ENCODE measurements at regions of chr6 and their contacts with region 1.

Region 1: DNA sequence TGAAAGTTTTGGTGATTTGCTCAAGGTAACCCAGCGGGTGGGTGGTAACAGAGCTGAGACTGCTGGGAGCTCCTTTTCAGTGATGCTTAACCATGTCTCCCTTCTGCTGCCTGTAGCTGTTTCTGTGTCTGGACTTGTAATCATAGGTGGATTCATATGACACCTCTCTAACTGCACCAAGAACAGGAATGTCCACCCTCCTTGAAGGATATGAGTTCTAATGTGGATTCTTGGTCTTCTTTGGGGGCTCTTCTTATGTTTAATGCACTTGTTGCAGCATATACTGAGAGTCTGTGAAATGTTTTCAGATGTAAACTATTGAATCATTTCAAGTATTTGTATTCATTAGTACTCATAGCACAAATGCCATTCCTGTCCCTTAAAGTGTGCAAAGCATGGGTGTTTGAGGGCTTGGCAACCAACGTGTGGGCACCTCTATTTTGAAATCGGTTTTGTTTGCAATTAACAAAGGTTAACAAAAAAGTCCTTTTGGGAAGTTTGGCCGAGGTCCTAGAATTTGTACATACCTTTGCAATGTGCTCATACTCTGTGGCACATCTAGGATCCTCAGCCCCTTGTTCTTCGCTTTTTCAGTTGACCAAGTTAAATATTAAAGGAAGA is 138.0 kb downstream of the SOX4 start:
- DNase-seq: peak; percentile 68 to 95
- H3K4me3 ChIP-seq: no peak overlapping the region
- H3K27ac ChIP-seq: peak overlapping the region; percentile 63
- H3K4me1 ChIP-seq: peaks cover 43% of the 10 kb centered on the region
- H3K27me3 ChIP-seq: no peaks in the 10 kb centered on the region
- CTCF ChIP-seq: no peak

Region 2: GRCh38 chr6:21679761-21680265 is 51.7 kb before region 1 on chr6:
- CTCF ChIA-PET with region 1: no interaction called
- POLR2A ChIA-PET with region 1: no interaction called
- intact Hi-C with region 1: loop called (anchors 2 kb)
- DNase-seq: peak; percentile 40 to 72
- H3K4me3 ChIP-seq: no peak overlapping the region
- H3K27ac ChIP-seq: no peak overlapping the region; the same call in 1 of the 2 replicates
- H3K4me1 ChIP-seq: peaks cover 14% of the 10 kb centered on the region; the same call in 1 of the 2 replicates
- H3K27me3 ChIP-seq: no peaks in the 10 kb centered on the region
- CTCF ChIP-seq: no peak

Region 3: GRCh38 chr6:21800948-21801438 is 69.5 kb after region 1 on chr6:
- CTCF ChIA-PET with region 1: no interaction called
- POLR2A ChIA-PET with region 1: no interaction called
- intact Hi-C with region 1: loop called (anchors 5 kb)
- DNase-seq: peak; percentile 76 to 95
- H3K4me3 ChIP-seq: no peak overlapping the region
- H3K27ac ChIP-seq: peak overlapping the region; percentile 60
- H3K4me1 ChIP-seq: peaks cover 23% of the 10 kb centered on the region
- H3K27me3 ChIP-seq: no peaks in the 10 kb centered on the region
- CTCF ChIP-seq: no peak

Region 4: DNA sequence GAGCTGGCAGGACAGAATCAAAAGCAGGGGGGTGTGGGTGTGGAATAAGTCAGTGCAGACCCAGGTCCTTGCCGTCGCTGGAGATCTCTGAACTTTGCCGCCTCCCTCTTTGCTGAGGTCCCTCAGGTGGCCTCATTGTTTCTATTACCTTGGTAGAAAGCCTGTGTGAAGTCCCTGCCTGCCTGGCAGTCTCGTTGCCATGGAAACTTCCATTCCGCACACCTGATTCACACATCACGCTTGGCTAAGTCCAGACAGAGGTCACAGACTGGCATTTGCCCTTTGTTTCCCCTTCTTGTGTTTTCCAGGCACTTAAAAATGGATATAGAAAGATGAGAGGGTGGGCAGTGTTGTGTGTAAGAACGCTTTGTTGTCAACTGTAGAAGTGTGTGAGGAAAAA is 304.8 kb after region 1 on chr6:
- CTCF ChIA-PET with region 1: no interaction called
- POLR2A ChIA-PET with region 1: no interaction called
- intact Hi-C with region 1: loop called (anchors 10 kb)
- DNase-seq: peak; percentile 84 to 91
- H3K4me3 ChIP-seq: peak overlapping the region; percentile 18; the same call in 1 of the 2 replicates
- H3K27ac ChIP-seq: peak overlapping the region; percentile 34; the same call in 1 of the 2 replicates
- H3K4me1 ChIP-seq: peaks cover 22% of the 10 kb centered on the region
- H3K27me3 ChIP-seq: no peaks in the 10 kb centered on the region
- CTCF ChIP-seq: no peak

Region 5: GRCh38 chr6:22892452-22892851 is 1160.9 kb after region 1 on chr6:
- CTCF ChIA-PET with region 1: no interaction called
- POLR2A ChIA-PET with region 1: no interaction called
- intact Hi-C with region 1: loop called (anchors 10 kb)
- DNase-seq: peak; percentile 53 to 89
- H3K4me3 ChIP-seq: no peak overlapping the region
- H3K27ac ChIP-seq: peak overlapping the region; percentile 90
- H3K4me1 ChIP-seq: peaks cover 25% of the 10 kb centered on the region
- H3K27me3 ChIP-seq: no peaks in the 10 kb centered on the region
- CTCF ChIP-seq: no peak